PC-9 (cell line): ENCODE measurements at regions of chr11 and their contacts with region 1.

Region 1: GRCh38 chr11:25211635-25212251 is 714.9 kb downstream of the LUZP2 start:
- DNase-seq: peak; percentile 71 to 84
- H3K4me3 ChIP-seq: no peak overlapping the region
- H3K27ac ChIP-seq: no peak overlapping the region
- H3K4me1 ChIP-seq: peaks cover 16% of the 10 kb centered on the region
- H3K27me3 ChIP-seq: no peaks in the 10 kb centered on the region
- CTCF ChIP-seq: no peak

Region 2: GRCh38 chr11:25065724-25066123 is 146.0 kb before region 1 on chr11:
- CTCF ChIA-PET with region 1: no interaction called
- POLR2A ChIA-PET with region 1: no interaction called
- intact Hi-C with region 1: loop called (anchors 1 kb)
- DNase-seq: peak in 1 of 2 experiments; percentile 80
- H3K4me3 ChIP-seq: no peak overlapping the region
- H3K27ac ChIP-seq: peak overlapping the region; percentile 53
- H3K4me1 ChIP-seq: peaks cover 15% of the 10 kb centered on the region; the same call in 1 of the 2 replicates
- H3K27me3 ChIP-seq: no peaks in the 10 kb centered on the region
- CTCF ChIP-seq: no peak

Region 3: GRCh38 chr11:25625094-25625493 is 413.4 kb after region 1 on chr11:
- CTCF ChIA-PET with region 1: no interaction called
- POLR2A ChIA-PET with region 1: no interaction called
- intact Hi-C with region 1: no loop called
- DNase-seq: no peak
- H3K4me3 ChIP-seq: no peak overlapping the region
- H3K27ac ChIP-seq: no peak overlapping the region
- H3K4me1 ChIP-seq: no peaks in the 10 kb centered on the region
- H3K27me3 ChIP-seq: no peaks in the 10 kb centered on the region
- CTCF ChIP-seq: no peak